Activated CD4-positive, alpha-beta memory T cell treated with anti-CD3 and anti-CD28 coated beads for 36 hours (primary cell): ENCODE measurements at regions of chr3 and their contacts with region 1.

Region 1: GRCh38 chr3:185498503-185499396 is at the start of gene TMEM41A:
- DNase-seq: peak; percentile 94
- H3K4me3 Mint-ChIP-seq: peak within 1 kb of the TSS; percentile 94
- H3K27ac Mint-ChIP-seq: peak within 1 kb of the TSS; percentile 78
- H3K4me1 Mint-ChIP-seq: peaks cover 16% of the 10 kb centered on the region
- H3K27me3 Mint-ChIP-seq: peaks cover 2% of the 10 kb centered on the region
- total RNA-seq, gene TMEM41A: 16.2 to 16.8 TPM

Region 2: DNA sequence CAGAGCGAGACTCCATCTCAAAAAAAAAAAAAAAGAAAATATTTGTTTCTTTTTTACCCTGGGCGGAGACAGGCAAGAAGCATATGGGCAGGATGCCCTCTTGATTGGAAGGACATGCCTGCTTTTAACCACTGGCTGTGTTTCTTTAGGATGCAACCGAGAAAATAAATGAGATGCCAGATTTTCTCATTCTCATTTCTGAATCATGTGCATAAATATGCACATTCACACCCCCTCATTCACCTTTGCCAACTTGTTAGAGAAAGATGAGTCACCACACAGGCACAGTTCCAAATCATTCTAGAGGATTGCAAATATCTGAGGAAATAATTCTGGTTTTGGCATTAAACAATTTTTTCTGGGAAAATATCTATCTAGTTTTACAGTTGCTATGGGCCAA is 50.4 kb after region 1 on chr3:
- CTCF ChIA-PET with region 1: no interaction called
- POLR2A ChIA-PET with region 1: no interaction called
- intact Hi-C with region 1: loop called (anchors 2 kb)
- DNase-seq: no peak
- H3K4me3 Mint-ChIP-seq: no peak overlapping the region
- H3K27ac Mint-ChIP-seq: no peak overlapping the region
- H3K4me1 Mint-ChIP-seq: peaks cover 18% of the 10 kb centered on the region
- H3K27me3 Mint-ChIP-seq: no peaks in the 10 kb centered on the region